ENCODE measurements at regions of chr17 and their contacts with region 1.

Region 1: DNA sequence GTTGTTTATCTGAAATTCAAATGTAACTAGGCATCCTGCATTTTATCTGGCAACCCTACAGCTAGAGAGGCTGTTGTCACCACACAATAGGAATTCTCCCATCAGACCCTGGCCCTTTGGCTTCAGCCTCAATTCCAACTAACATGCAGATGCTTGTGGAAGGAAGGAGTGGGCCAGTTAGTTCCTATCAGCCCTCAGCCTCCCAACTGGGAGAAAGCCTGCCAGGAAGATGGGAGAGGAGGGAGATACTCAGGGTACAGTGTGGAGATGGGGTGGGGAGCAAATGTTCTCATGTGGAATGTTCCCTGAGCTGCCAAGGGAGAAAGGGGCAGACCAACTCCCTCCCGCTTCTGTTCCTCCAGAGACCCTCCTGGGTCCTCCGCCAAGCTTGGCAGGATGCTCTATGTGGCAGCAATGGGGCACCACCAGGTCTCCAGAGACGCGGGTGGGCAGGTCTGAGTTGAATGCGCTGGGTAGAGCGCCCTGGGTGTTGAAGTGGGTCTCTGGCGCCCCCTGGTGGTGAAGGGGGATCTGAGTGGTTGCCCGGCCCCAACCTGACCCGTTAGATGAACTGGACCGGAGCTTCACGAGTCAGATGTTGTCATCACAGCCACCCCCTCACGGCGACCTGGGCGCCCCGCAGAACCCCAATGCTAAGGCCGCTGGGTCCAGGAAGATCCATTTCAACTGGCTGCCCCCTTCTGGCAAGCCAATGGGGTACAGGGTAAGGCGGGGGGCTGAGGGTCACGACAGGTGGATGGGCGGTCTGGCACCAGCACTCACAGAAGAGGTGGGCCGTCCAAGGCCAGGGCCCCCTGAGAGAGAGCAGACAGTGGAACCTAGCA is 15.2 kb downstream of the GALK1 start:
- DNase-seq: peak; percentile 85 to 93 (median 86)
- ATAC-seq: peak; percentile 76
- H3K4me3 ChIP-seq: no peak overlapping the region
- H3K4me1 ChIP-seq: peaks cover 3% of the 10 kb centered on the region
- CTCF ChIP-seq: peak; percentile 86

Region 2: DNA sequence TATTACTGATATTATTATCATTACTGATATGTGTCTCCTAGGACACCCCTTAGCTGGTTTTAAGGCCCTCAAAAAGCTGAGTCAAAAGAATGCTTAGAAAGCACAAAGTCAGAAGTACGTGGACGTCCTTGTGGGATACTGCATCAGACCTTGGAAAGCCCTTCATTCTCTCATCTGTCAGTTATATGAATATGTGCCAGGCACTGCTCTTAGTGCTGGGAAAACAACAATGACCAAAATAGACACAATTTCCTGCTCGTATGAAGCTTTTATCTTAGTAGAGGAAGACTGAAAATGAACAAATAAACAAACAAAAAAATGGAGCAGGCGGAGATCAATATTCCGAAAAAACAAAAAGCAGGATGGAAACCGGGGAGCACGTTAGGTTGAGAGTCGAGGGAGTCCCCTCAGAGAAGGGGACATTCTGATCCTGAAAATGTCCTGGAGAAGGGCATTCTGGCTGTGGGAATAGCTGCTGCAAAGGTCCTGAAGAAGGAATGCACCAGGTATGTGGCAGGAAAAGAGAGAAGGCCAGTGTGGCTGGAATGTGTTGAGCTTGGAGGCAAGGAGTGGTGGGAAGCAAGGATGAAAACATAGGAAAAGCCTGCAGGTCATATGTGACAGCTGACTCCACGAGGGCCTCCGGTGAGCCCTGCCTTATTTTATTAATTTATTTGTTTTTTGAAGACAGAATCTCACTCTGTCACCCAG is 308.9 kb before region 1 on chr17:
- intact Hi-C with region 1: no loop called
- DNase-seq: no peak
- ATAC-seq: no peak
- H3K4me3 ChIP-seq: no peak overlapping the region
- H3K4me1 ChIP-seq: no peaks in the 10 kb centered on the region
- CTCF ChIP-seq: no peak

Region 3: DNA sequence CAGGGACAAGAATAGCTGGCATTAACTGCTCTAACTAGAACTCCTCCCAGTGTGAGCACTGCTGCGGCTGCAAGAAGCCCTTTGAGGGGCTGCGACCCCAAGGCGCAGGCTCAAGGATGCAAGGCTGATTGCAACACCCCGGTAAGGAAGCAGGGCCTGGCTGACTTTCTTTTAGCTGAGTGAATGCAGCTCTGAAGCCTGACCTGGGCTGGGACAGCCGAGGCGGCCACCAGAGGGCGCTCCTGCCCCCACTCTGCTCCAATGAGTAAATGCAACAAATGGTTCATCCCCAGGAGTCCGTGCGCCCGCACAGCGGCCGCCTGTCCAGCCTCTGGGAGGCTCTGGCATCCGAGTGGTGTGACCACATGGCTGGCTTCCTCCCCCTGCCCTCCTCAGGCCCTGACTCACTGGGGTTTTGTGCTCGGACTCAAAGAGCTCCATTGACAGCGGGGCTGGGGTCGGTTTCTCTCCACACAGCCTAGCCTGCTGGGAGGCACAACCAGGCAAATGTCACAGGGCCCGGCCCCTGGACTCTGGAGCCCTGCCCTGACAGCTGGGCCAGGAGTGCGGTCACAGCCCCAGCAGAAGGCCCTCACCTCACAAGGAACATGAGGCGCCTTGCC is 116.8 kb before region 1 on chr17 and contains the start of gene SMIM5:
- intact Hi-C with region 1: loop called in 1 of 2 experiments (anchors 5 kb)
- DNase-seq: peak; percentile 87 to 92 (median 92)
- ATAC-seq: peak; percentile 74
- H3K4me3 ChIP-seq: no peak within 1 kb of the TSS
- H3K4me1 ChIP-seq: peaks cover 37% of the 10 kb centered on the region
- CTCF ChIP-seq: peak; percentile 94
- total RNA-seq, gene SMIM5: 20.7 to 41.6 (median 27.5) TPM

Region 4: GRCh38 chr17:75673487-75673886 is 76.3 kb before region 1 on chr17:
- intact Hi-C with region 1: loop called (anchors 5 kb)
- DNase-seq: no peak
- ATAC-seq: no peak
- H3K4me3 ChIP-seq: no peak overlapping the region
- H3K4me1 ChIP-seq: peaks cover 9% of the 10 kb centered on the region
- CTCF ChIP-seq: no peak

Region 5: DNA sequence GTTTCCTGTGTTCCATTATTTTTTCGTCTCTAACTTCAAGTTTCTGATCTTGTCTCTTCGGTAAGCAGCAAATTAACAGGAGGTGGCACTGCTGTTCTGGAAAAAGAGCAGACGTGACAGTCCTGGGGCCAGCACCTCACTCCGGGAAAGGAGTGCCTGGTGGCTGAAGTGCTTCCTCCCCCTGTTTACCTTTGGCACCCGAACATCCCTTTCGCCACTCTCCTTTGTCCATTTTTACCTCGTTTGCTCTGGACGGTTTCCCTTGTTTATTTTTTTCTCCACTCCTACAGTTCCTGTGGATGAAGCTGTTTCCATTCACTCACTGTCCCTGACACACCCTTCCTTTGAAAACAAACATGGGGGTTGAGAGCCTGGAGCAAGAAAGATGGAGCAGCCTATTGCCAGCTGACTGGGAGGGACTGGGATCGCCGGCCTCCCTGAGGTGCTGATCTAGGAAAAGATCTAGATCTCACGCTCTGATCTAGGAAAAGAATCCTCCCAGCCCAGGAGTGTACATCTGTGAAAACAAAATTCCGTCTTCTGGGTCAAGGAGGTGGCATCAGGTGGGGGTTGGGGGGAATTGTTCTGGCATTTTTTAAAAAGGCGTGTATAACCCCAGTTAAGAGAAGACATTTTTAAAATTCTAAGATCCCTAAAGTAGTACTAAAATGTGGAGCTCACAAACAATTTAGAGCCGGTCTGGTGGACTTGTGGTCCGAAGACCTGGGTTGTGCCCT is 69.9 kb before region 1 on chr17:
- intact Hi-C with region 1: loop called in 1 of 2 experiments (anchors 5 kb)
- DNase-seq: peak in 2 of 3 donors; percentile 48 to 75
- ATAC-seq: peak; percentile 72
- H3K4me3 ChIP-seq: no peak overlapping the region
- H3K4me1 ChIP-seq: peaks cover 19% of the 10 kb centered on the region
- CTCF ChIP-seq: peak; percentile 22

Region 6: GRCh38 chr17:76182016-76182764 is 432.4 kb after region 1 on chr17:
- intact Hi-C with region 1: no loop called
- DNase-seq: peak; percentile 88 to 98 (median 95)
- ATAC-seq: peak; percentile 97
- H3K4me3 ChIP-seq: no peak overlapping the region
- H3K4me1 ChIP-seq: no peaks in the 10 kb centered on the region
- CTCF ChIP-seq: peak; percentile 77

Measured in mucosa of descending colon (tissue), 3 donors.